GM13976 (cell line): ENCODE measurements at regions of chr15 and their contacts with region 1.

Region 1: DNA sequence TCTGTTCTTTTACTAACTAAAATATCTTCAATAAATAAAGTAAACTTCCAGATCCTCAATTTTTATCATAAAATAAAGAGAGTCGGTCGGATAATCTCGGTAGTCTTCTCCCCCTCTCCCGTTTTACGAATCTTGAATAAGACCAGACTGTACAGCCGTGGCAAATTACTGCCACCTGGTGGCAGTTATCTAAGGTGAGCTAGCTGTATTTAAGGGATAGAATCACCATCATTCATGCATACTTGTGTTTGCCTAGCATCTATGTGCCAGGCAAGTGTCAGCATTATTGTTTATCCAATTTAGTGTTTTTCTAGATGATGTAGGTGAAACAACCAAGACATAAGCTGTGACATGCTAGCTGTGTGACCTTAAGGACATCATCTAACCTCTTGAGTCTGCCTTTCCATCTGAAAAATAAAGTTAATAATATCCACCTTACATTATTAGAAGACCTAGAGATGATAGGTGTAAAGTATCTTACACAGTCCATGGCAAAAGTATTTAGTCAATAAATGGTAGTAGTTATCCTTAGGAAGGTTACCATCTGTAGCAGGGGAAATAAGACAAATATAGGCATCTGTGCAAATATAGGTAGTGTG is 21.3 kb downstream of the DUT start:
- DNase-seq: peak; percentile 64
- CTCF ChIP-seq: peak; percentile 65

Region 2: DNA sequence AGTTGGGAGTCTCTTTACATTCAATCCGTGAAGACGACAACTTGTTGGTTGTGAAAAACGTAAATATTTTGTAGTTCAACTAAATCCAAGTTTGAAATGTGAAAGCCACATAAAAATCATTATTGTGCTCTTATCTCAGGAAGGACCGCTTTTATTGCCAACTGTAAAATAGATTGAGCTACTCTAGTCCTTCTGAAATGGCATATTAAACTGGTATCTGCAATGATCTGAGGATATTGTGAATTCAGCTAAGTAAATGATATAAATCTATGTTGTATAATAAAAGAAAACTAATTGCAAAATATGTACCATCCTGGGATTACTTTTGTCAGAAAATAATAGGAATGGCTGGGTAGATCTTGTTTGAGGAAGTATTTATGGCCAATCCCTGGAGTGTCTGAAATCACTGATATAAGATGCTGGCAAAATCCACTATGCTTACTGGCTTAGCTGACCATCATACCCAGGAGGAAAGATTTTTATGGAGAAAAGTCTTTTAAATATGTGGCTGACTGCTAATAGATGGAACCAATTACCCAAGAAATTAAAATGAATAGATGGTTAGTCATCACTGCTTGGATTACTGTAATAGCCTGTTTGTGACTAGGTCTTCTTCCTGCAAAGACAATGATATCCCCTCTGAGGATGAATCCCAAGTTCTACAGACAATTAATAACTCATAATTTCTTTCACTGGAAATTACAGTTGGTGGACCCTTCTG is 443.5 kb before region 1 on chr15:
- in situ Hi-C with region 1: no loop called
- DNase-seq: no peak
- CTCF ChIP-seq: no peak

Region 3: GRCh38 chr15:48645558-48646330 is 293.2 kb after region 1 on chr15 and contains the start of gene FBN1:
- in situ Hi-C with region 1: loop called (anchors 25 kb)
- DNase-seq: peak; percentile 83
- CTCF ChIP-seq: no peak

Region 4: DNA sequence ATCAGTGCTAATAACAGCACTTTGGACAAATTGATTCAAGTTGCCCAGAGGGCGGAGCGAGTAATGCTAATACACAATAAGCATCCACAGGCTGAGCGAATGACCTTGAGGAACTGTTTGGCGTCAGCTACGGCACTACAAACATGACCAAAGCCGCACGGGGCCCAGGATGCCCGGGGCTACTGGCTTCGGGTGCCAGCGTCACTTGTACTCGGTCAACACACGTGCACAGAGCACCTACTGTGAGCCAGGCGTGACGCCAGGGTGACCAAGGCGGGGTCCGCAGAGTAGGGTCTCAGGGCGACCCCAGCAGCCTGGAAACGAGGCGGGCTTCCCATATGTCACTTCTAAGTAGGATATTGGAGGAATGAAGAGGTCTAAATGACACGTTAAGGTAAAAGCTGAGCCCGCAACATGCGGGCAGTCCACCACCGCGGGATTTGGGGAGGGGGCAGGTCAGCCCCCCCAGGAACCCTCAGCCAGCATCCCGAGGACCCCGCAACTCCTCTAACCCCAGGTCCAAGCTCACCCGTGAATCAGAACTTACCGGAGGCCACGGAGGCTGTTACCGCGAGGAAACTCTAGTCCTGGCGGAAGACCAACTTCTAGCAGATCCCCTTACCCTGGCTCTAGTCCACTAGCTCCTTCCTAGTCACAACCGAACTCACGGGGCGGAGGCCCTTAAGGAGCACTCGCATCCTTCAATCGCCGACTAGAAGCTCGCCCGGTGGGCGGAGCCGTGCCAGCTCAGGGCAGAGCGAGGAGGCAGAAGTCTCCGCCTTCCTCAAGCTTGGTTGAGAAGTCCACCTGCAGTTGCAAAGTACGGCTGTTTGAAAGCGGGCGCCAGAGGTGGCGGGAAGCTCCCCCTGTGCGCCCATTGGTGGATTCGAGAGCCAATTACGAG is 458.1 kb after region 1 on chr15 and contains the start of gene CEP152:
- in situ Hi-C with region 1: loop called (anchors 25 kb)
- DNase-seq: peak; percentile 91
- CTCF ChIP-seq: no peak

Region 5: DNA sequence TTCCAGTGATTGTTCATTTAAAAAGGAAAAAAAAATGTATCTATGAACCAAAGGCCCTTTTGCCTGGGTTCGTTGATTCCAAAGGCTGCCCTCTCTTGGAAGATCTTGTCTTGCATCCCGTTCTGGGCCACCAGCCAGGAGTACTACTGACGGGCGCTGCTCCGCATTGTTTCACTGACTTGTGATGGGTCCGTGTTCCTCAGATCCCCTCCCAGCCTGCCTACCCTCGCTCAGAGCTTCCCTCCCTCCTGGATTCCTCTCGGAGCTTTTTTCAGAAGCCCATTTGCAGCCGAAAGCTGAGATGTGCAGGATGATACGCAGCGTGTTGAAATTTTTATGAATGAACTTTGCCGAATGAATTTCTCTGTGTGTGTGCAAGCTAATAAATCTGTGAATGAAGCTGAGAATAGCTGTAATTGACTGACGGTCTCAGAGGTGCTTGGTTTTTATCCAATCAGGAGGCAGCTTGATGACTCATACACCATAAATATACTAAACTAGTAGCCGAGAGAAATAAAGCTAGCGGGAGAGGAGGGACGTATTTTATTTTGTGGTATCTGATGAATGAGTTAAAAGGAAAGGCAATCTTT is 611.0 kb after region 1 on chr15 and contains the start of gene SHC4:
- in situ Hi-C with region 1: loop called (anchors 25 kb)
- DNase-seq: peak; percentile 73
- CTCF ChIP-seq: no peak